ENCODE measurements at regions of chr14 and their contacts with region 1.

Region 1: DNA sequence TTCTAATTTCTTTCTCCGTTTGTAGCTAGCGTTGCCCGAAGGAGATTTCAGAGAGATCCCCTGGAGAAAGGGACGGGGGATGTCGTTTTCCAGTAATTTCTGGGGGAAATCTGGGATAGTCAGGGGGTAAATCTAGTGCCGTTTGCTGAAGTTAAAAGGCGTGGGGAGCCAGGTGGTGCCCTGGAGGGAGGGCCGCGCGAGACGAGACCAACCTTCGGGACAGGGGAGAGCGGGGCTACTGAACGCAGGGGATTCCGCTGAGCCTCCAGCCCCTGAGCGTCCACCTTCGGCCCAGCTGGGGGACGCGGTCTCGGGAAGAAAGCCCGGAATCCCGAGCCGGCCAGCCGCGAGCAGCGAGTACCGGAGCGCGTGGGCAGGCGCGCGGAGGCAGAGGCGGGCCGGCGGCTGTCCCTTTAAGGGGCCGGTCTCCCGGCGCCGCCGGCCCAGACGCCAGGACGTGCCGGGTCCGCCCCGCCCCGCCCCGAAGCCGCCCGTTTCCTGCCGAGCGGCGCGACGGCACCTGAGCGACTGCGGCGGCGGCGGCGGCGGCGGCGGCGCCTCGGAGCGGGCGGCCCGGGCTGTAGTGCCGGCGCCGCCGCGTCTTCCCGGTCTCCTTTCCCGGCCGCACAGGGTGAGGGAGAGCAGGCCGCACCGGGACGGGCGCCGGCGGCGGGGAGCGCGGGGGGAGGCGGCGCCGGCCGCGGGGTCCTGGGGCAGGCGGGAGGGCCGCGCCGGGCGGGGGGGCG is at the start of gene KTN1:
- DNase-seq: peak; percentile 91
- ATAC-seq: peak; percentile 90
- H3K4me3 ChIP-seq: peak within 1 kb of the TSS; percentile 72 to 96 (median 85)
- H3K4me3 Mint-ChIP-seq: peak within 1 kb of the TSS; percentile 96
- H3K27ac ChIP-seq: peak within 1 kb of the TSS; percentile 59 to 91
- H3K27ac Mint-ChIP-seq: peak within 1 kb of the TSS; percentile 96
- H3K4me1 ChIP-seq: peaks cover 37 to 39% of the 10 kb centered on the region in 2 donors
- H3K4me1 Mint-ChIP-seq: peaks cover 29% of the 10 kb centered on the region
- H3K27me3 ChIP-seq: no peaks in the 10 kb centered on the region
- H3K27me3 Mint-ChIP-seq: no peaks in the 10 kb centered on the region
- CTCF ChIP-seq: no peak
- total RNA-seq, gene KTN1: 120 and 123 TPM in 2 replicates

Region 2: DNA sequence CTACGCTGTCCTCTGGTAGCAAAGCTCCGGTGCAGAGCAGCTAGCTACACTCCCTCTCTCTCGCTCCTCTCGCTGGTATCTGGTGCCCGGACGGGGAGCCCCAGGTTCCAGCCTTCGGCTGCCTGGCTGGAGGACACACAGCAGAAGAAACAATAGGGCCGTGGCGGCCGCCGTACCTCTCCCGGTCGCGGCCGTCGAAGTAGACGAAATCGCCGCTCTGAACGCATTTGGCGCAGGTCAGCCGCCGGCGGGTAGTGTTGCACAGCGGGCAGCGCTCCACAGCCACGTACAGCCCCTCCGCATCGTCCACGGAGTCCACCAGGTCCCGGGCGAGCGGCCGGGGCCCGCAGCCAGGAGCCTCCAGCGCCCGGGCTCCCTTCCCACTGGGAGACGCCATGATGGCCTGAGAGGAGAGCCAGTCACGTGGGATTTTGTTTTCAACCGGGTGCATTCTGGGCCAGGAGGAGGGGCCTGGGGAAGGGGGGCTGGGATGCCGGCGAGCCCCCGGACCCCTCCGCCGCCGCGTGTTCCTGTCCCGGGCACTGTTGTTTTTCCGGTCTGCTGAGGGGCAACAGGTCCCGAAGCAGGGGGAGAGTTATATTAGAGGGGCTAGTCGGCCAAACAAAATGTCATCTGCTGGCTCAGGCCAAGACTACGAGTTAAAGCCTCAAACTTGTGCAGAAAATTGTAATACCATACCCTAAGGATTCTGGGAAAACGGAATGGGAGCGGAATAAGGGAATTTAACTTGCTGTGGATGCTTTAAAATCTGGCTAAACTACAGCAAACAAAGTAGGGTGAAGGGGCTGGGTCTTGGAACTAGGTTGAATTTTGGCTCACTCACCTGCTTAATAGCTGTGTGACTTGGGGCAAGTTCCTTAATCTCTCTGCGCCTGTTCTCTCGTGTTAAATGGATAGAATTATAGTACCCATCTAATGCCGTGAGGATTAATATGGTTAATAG is 168.2 kb before region 1 on chr14 and contains the start of gene ATG14:
- CTCF ChIA-PET with region 1: no interaction called
- POLR2A ChIA-PET with region 1: no interaction called
- intact Hi-C with region 1: loop called (anchors 10 kb)
- DNase-seq: peak; percentile 81
- ATAC-seq: peak; percentile 99
- H3K4me3 ChIP-seq: peak within 1 kb of the TSS; percentile 62 to 95 (median 93)
- H3K4me3 Mint-ChIP-seq: peak within 1 kb of the TSS; percentile 93
- H3K27ac ChIP-seq: peak within 1 kb of the TSS; percentile 49 to 87
- H3K27ac Mint-ChIP-seq: peak within 1 kb of the TSS; percentile 87
- H3K4me1 ChIP-seq: peaks cover 16 to 17% of the 10 kb centered on the region in 2 donors
- H3K4me1 Mint-ChIP-seq: peaks cover 35% of the 10 kb centered on the region
- H3K27me3 ChIP-seq: no peaks in the 10 kb centered on the region
- H3K27me3 Mint-ChIP-seq: peaks cover 19% of the 10 kb centered on the region
- CTCF ChIP-seq: no peak
- total RNA-seq, gene ATG14: 15.5 and 17.0 TPM in 2 replicates

Region 3: GRCh38 chr14:55500219-55500701 is 79.6 kb before region 1 on chr14:
- CTCF ChIA-PET with region 1: no interaction called
- POLR2A ChIA-PET with region 1: no interaction called
- intact Hi-C with region 1: no loop called
- DNase-seq: no peak
- ATAC-seq: no peak
- H3K4me3 ChIP-seq: no peak overlapping the region
- H3K4me3 Mint-ChIP-seq: no peak overlapping the region
- H3K27ac ChIP-seq: no peak overlapping the region
- H3K27ac Mint-ChIP-seq: no peak overlapping the region
- H3K4me1 ChIP-seq: no peaks in the 10 kb centered on the region
- H3K4me1 Mint-ChIP-seq: no peaks in the 10 kb centered on the region
- H3K27me3 ChIP-seq: peaks cover 0 to 5% (median 2%) of the 10 kb centered on the region in 4 experiments
- H3K27me3 Mint-ChIP-seq: peaks cover 26% of the 10 kb centered on the region
- CTCF ChIP-seq: no peak

Region 4: DNA sequence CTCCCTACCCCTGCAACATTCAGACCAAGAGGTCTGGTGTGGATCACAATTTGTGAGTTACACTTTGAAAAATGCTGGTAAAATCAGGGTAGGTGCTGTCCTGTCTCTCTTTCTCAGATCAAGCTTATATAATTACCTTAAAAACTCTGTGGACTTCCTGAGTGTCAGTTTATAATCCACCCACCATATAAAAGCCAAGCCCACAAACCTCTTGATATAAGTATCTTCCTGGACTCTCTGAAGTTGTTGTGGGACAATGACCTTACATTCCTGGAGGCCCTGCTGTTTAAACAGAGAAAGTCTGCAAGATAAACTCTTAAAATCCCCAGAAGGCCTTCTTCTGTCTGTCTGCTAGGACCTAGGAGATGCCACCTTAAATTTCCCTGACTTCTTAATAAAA is 11.3 kb before region 1 on chr14:
- CTCF ChIA-PET with region 1: no interaction called
- POLR2A ChIA-PET with region 1: no interaction called
- intact Hi-C with region 1: no loop called
- DNase-seq: no peak
- ATAC-seq: no peak
- H3K4me3 ChIP-seq: no peak overlapping the region
- H3K4me3 Mint-ChIP-seq: no peak overlapping the region
- H3K27ac ChIP-seq: no peak overlapping the region
- H3K27ac Mint-ChIP-seq: no peak overlapping the region
- H3K4me1 ChIP-seq: peaks cover 11 to 17% of the 10 kb centered on the region in 2 donors
- H3K4me1 Mint-ChIP-seq: peaks cover 13% of the 10 kb centered on the region
- H3K27me3 ChIP-seq: no peaks in the 10 kb centered on the region
- H3K27me3 Mint-ChIP-seq: no peaks in the 10 kb centered on the region
- CTCF ChIP-seq: no peak

Region 5: DNA sequence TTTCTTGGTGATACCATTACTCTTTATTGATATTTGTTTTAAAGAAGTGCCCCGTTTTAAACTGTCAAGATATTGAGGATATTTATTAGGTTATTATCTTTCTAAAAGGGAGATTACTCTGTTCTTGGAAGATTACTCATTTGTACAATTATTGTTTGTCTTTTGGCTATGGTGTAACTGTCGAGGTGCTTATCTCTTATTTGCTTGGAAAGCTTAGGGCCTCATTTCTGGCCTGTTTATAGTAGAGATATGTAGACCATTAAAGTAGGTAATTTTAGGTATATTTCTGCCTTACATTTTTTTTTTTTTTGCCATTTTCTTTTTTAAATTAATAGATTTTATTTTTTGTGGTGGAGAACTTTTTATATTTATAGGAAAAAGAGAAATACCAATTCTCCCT is 74.3 kb after region 1 on chr14:
- CTCF ChIA-PET with region 1: no interaction called
- POLR2A ChIA-PET with region 1: no interaction called
- intact Hi-C with region 1: loop called (anchors 5 kb)
- DNase-seq: no peak
- ATAC-seq: no peak
- H3K4me3 ChIP-seq: no peak overlapping the region
- H3K4me3 Mint-ChIP-seq: no peak overlapping the region
- H3K27ac ChIP-seq: no peak overlapping the region
- H3K27ac Mint-ChIP-seq: no peak overlapping the region
- H3K4me1 ChIP-seq: no peaks in the 10 kb centered on the region
- H3K4me1 Mint-ChIP-seq: no peaks in the 10 kb centered on the region
- H3K27me3 ChIP-seq: no peaks in the 10 kb centered on the region
- H3K27me3 Mint-ChIP-seq: no peaks in the 10 kb centered on the region
- CTCF ChIP-seq: no peak